Activated naive CD4-positive, alpha-beta T cell treated with anti-CD3 and anti-CD28 coated beads, Interleukin-2, amount 10 ng/mL, durations not matched to agents 7 days and 5 days (primary cell): ENCODE measurements at regions of chr11 and their contacts with region 1.

Region 1: DNA sequence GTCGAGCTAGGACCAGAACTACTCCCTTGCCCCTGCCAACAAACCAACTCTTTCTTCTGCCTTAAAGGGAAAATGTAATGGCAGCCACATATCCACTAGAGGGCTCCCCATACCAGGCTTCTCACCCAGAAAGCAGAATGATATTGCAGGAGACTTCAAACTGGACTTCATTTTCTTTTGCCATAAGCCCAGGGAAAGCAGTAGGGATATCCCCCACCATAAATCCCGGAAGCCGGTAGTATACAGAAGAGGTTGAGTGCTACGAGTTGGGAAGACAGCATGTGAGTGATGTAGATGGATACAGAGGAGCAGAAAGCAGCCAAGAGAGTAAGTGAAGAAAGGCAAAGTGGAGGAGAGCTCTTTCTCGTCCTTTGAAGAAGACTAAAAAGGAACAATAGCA is 12.1 kb downstream of the PLAAT5 start:
- DNase-seq: peak; percentile 66
- H3K4me3 Mint-ChIP-seq: no peak overlapping the region
- H3K27ac Mint-ChIP-seq: no peak overlapping the region
- H3K4me1 Mint-ChIP-seq: no peaks in the 10 kb centered on the region
- H3K27me3 Mint-ChIP-seq: peaks cover 26% of the 10 kb centered on the region

Region 2: GRCh38 chr11:63080682-63081081 is 398.2 kb before region 1 on chr11:
- CTCF ChIA-PET with region 1: no interaction called
- DNase-seq: no peak
- H3K4me3 Mint-ChIP-seq: no peak overlapping the region
- H3K27ac Mint-ChIP-seq: no peak overlapping the region
- H3K4me1 Mint-ChIP-seq: peaks cover 3% of the 10 kb centered on the region
- H3K27me3 Mint-ChIP-seq: no peaks in the 10 kb centered on the region

Region 3: DNA sequence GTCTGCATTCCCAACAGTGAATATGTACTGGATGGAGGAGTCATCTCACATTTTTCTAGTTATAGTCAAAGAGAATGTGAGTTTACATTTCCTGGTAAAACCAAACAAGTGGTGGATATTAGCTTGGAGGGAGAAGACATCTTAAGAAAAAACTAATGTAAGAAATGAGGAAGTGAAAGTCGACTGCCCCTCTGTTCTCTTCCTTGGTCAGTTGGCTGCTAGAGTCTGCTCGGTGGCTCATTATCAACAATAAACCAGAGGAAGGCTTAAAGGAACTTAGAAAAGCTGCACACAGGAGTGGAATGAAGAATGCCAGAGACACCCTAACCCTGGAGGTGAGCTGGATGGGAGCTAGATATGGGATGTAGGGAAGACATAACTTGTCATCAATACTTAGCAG is 103.5 kb before region 1 on chr11:
- CTCF ChIA-PET with region 1: no interaction called
- DNase-seq: no peak
- H3K4me3 Mint-ChIP-seq: no peak overlapping the region
- H3K27ac Mint-ChIP-seq: no peak overlapping the region
- H3K4me1 Mint-ChIP-seq: no peaks in the 10 kb centered on the region
- H3K27me3 Mint-ChIP-seq: peaks cover 8% of the 10 kb centered on the region

Region 4: GRCh38 chr11:63508009-63508408 is 29.1 kb after region 1 on chr11:
- CTCF ChIA-PET with region 1: interaction called, 33 read pairs
- DNase-seq: peak; percentile 32
- H3K4me3 Mint-ChIP-seq: no peak overlapping the region
- H3K27ac Mint-ChIP-seq: no peak overlapping the region
- H3K4me1 Mint-ChIP-seq: no peaks in the 10 kb centered on the region
- H3K27me3 Mint-ChIP-seq: peaks cover 15% of the 10 kb centered on the region

Region 5: DNA sequence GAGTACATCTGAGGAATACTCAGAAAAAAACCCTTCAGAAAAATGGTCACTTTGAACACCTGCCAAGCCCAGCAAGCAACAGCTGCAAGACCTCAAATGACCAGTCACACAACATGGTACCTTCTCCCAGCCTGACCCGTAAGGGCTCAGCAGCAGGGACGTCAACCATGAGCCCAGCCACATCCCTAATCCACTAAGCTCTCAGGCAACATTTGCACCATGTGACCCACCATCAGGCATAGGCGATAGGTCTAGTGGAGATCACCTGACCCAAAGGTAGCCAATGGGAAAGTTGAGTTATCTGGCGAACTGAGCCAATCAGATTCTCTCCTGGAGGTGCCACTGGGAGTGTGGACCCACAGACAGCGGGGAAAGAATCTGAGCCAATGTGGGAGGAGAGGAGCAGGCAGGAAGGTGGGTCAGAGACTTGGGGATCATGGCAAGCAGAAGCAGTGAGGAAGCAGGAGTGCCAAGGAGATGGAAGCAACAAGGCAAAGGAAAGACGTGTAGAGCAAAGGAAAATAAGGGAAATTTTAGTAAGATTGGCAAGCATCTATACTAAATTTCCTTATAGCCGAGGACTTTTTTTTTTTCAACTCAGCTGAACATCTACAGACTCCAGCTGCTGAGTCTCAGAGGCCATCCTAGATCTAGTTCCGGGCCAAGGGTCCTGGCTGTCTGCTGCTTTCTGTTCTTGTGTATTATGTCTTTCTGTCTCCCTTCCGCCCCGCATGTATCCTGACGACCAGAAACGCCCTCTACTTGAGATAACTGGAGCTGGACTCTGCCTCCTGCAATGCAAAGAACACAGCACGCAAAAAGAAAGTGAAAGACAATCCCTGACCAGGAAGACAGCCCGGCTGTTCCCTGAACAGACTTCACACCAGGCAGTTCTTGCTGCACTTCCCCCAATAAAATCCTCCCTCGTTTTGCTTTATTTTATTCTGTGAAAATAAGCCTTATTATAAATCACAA is 95.3 kb after region 1 on chr11:
- CTCF ChIA-PET with region 1: interaction called, 17 read pairs
- DNase-seq: peak; percentile 72
- H3K4me3 Mint-ChIP-seq: peak overlapping the region; percentile 50
- H3K27ac Mint-ChIP-seq: peak overlapping the region; percentile 82
- H3K4me1 Mint-ChIP-seq: peaks cover 24% of the 10 kb centered on the region
- H3K27me3 Mint-ChIP-seq: peaks cover 14% of the 10 kb centered on the region

Region 6: GRCh38 chr11:63599211-63600122 is 120.6 kb after region 1 on chr11:
- CTCF ChIA-PET with region 1: no interaction called
- DNase-seq: no peak
- H3K4me3 Mint-ChIP-seq: no peak overlapping the region
- H3K27ac Mint-ChIP-seq: no peak overlapping the region
- H3K4me1 Mint-ChIP-seq: no peaks in the 10 kb centered on the region
- H3K27me3 Mint-ChIP-seq: no peaks in the 10 kb centered on the region

Region 7: GRCh38 chr11:63635762-63636465 is 157.0 kb after region 1 on chr11:
- CTCF ChIA-PET with region 1: interaction called, 76 read pairs
- DNase-seq: peak; percentile 77
- H3K4me3 Mint-ChIP-seq: no peak overlapping the region
- H3K27ac Mint-ChIP-seq: no peak overlapping the region
- H3K4me1 Mint-ChIP-seq: peaks cover 15% of the 10 kb centered on the region
- H3K27me3 Mint-ChIP-seq: no peaks in the 10 kb centered on the region

Region 8: DNA sequence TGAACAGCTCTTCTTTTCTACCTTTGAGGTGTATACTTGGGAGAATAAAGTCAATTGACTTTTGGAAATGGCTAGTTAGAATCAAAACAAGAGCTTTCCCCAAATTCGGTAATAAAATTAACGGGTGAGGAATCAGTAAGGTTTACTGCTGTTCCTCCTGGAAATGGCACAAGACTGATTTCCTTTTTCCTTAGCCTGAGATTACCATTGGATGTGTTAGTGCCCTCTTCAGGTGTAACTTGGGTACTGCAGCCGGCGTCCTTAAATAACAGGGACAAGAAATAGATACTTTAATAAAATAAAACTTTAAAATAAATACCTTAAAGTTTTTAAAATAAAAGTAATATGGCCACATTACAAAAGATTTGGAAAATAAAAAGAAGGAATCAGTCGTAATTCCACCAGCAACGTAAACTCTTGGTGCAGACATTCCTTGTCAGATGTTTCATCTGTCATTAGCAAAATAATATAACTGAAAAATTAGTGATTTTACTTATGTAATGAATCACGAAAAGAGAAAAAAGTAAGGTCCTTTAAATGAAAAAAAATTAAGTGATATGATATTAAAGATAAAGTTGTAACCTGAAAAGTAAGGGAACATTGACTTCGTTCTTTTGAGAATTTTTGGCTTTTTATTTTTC is 259.9 kb after region 1 on chr11:
- CTCF ChIA-PET with region 1: interaction called, 14 read pairs
- DNase-seq: peak; percentile 77
- H3K4me3 Mint-ChIP-seq: no peak overlapping the region
- H3K27ac Mint-ChIP-seq: no peak overlapping the region
- H3K4me1 Mint-ChIP-seq: peaks cover 2% of the 10 kb centered on the region
- H3K27me3 Mint-ChIP-seq: no peaks in the 10 kb centered on the region